Activated T-helper 2 cell treated with anti-CD3 and anti-CD28 coated beads, Interferon-gamma antibody, Interleukin-2, Interleukin-4, amounts not matched to agents 10 μg/mL and 5 μg/mL and 100 μg/mL, durations not matched to agents 14 hours and 24 hours and 36 hours (primary cell): ENCODE measurements at regions of chr5 and their contacts with region 1.

Region 1: GRCh38 chr5:69189162-69190086 is at the start of gene CENPH:
- DNase-seq: peak; percentile 93
- H3K4me3 Mint-ChIP-seq: peak within 1 kb of the TSS; percentile 92
- H3K27ac Mint-ChIP-seq: peak within 1 kb of the TSS; percentile 97
- H3K4me1 Mint-ChIP-seq: peaks cover 13% of the 10 kb centered on the region
- H3K27me3 Mint-ChIP-seq: no peaks in the 10 kb centered on the region
- total RNA-seq, gene CENPH: 35.3 and 37.0 TPM in 2 replicates

Region 2: DNA sequence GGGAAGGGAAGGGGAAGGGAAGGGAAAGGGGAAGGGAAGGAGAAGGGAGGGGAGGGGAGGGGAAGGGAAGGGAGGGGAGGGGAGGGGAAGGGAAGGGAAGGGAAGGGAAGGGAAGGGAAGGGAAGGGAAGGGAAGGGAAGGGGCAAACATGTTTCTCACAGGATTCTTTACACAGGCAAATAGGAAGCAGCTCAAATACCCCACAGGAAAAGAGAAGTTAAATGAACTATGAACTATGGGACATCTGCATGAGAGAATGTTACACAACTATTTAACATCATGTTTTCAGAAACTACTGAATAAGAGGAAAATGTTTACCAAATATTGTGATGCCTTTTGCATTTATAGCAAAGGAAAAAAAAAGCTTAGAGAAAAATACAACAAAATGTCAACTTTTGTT is 221.0 kb before region 1 on chr5:
- intact Hi-C with region 1: no loop called
- DNase-seq: no peak
- H3K4me3 Mint-ChIP-seq: no peak overlapping the region
- H3K27ac Mint-ChIP-seq: no peak overlapping the region
- H3K4me1 Mint-ChIP-seq: no peaks in the 10 kb centered on the region
- H3K27me3 Mint-ChIP-seq: peaks cover 3% of the 10 kb centered on the region

Region 3: DNA sequence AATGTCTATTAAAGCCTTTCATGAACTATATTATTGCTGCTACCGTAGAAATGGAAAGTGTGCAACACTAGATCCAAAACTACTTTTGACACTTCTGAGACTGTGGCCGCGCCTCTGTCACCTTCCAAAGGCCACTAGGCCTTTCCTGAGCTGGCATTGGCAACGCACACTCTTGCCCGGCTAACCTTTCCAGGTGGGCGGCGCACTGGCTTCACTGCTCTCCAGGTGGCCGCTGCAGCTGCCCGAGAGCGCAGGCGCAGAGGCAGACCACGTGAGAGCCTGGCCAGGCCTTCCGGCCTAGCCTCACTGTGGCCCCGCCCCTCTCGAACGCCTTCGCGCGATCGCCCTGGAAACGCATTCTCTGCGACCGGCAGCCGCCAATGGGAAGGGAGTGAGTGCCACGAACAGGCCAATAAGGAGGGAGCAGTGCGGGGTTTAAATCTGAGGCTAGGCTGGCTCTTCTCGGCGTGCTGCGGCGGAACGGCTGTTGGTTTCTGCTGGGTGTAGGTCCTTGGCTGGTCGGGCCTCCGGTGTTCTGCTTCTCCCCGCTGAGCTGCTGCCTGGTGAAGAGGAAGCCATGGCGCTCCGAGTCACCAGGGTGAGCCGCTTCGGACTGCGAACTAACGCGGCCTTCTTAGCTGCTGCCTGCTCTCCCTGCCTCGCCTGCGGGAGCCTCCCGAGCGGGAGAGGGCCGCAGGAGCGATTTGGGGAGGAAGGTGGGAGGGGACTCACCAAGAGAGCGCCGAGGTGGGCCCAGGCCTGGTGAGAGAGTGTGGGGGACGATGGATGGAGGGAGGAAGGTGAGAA is 22.5 kb before region 1 on chr5 and contains the start of gene CCNB1:
- intact Hi-C with region 1: loop called (anchors 1 kb)
- DNase-seq: peak; percentile 99
- H3K4me3 Mint-ChIP-seq: peak within 1 kb of the TSS; percentile 94
- H3K27ac Mint-ChIP-seq: peak within 1 kb of the TSS; percentile 69
- H3K4me1 Mint-ChIP-seq: peaks cover 32% of the 10 kb centered on the region
- H3K27me3 Mint-ChIP-seq: no peaks in the 10 kb centered on the region
- total RNA-seq, gene CCNB1: 152 and 164 TPM in 2 replicates

Region 4: DNA sequence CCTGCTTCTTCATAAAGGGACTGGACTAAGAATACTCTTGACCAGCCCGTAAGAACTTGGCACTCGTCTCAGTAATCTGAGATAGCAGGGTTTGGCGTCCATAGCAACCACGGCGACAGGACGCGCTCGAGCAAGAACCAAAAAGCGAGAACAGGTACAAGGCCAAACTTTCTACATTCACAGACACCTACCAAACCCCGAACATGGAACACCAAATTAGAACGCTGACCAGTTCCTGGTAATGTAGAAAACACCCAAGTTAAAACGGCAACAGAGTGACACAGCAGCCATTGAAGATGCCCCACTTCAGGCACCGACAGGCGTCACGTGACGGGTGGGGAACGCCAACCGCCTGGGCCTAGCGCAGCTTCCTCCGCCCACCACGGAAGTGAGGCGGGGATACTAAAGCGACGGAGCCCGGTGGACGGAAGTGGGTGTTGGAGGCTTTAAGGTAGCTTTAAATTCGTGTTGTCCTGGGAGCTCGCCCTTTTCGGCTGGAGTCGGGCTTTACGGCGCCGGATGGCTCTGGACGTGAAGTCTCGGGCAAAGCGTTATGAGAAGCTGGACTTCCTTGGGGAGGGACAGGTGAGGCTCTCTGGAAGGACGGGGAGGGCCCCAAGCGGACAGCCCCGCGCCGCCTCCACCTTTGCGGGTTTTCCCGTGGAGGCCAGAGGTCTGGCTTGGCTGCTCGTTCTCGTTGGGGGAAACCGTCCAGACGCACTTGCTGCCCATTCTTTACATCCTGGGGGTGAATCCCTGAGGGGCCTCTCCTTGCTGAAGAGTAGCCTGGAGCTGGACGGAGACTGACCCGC is 45.2 kb after region 1 on chr5 and contains the start of gene CDK7:
- intact Hi-C with region 1: loop called (anchors 1 kb)
- DNase-seq: peak; percentile 91
- H3K4me3 Mint-ChIP-seq: peak within 1 kb of the TSS; percentile 95
- H3K27ac Mint-ChIP-seq: peak within 1 kb of the TSS; percentile 80
- H3K4me1 Mint-ChIP-seq: peaks cover 30% of the 10 kb centered on the region
- H3K27me3 Mint-ChIP-seq: no peaks in the 10 kb centered on the region
- total RNA-seq, gene CDK7: 46.0 and 49.4 TPM in 2 replicates